A549 (cell line): ENCODE measurements at regions of chr13 and their contacts with region 1.

Region 1: GRCh38 chr13:51286135-51287002 is 53.1 kb upstream of the SERPINE3 start:
- DNase-seq: peak; percentile 31 to 63
- ATAC-seq: peak; percentile 90 to 97
- H3K4me3 ChIP-seq: no peak overlapping the region
- H3K27ac ChIP-seq: no peak overlapping the region
- H3K4me1 ChIP-seq: peaks cover 1% of the 10 kb centered on the region; the same call in 1 of the 3 replicates
- CTCF ChIP-seq: peak; percentile 82
- EP300 ChIP-seq: no peak
- POLR2A ChIP-seq: no peak
- RAD21 ChIP-seq: peak; percentile 73 to 78

Region 2: DNA sequence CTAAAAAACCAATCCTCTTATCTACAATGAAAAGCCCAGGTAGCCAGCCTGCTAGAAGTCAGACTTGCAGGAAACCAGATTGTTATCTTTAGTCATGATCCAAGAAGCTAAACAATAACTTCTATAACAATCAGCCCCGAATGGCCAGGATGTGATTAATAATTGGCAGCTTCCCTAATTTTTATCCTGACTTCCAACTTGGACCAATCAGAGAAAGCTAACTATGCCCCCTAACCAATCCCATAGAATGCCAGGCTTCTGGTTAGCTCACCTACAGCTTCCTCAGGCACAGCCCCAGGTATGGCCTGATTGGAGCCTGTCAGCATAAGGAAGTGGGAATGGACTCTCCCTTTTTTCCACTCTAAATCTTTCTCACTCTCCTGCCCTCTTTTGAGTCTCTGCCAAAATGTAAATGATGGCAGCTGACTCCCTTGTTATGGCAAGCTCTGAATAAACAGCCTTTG is 837.8 kb before region 1 on chr13:
- CTCF ChIA-PET with region 1: no interaction called
- POLR2A ChIA-PET with region 1: no interaction called
- DNase-seq: no peak
- ATAC-seq: no peak
- H3K4me3 ChIP-seq: no peak overlapping the region
- H3K27ac ChIP-seq: no peak overlapping the region
- H3K4me1 ChIP-seq: no peaks in the 10 kb centered on the region
- CTCF ChIP-seq: no peak
- EP300 ChIP-seq: no peak
- POLR2A ChIP-seq: no peak
- RAD21 ChIP-seq: no peak

Region 3: DNA sequence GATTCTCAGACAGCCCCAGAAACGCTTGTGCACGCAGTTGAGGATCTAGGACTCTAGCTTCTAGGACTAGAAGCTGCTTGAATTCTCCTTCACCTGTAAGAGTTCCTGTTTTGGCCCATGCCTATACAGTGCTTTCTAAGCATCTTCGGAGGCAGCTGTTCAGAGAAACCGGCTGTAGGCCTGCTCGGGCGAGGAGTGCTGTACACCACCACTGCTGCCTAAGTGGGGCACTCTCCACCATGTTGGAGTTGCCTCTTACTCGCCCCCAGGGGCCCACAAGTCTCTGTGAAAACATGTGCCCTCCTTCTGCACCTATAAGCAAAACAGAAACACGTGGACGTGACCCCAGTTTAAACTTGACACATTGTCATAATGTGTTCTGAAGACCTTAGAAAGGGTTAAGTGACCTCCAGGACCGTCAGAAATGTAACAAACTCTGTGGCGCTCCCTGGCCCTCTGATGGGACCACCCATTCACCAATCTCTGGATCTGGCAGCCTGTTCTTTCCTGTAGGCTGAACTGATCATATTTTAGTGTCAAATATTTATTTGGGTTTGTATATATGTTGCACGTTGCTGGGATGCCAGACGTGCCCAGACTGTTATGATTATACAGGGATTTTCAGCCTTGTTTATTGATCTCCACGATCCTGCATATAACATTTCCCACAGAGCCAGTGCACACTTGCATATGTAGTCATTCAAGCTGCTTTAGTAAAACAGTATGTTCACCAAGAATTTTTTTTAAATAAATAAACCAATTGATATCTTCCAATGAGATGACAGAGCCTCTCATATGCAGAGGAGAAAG is 236.1 kb before region 1 on chr13:
- CTCF ChIA-PET with region 1: no interaction called
- POLR2A ChIA-PET with region 1: no interaction called
- DNase-seq: no peak
- ATAC-seq: no peak
- H3K4me3 ChIP-seq: no peak overlapping the region
- H3K27ac ChIP-seq: no peak overlapping the region
- H3K4me1 ChIP-seq: no peaks in the 10 kb centered on the region
- CTCF ChIP-seq: no peak
- EP300 ChIP-seq: no peak
- POLR2A ChIP-seq: no peak
- RAD21 ChIP-seq: no peak

Region 4: GRCh38 chr13:51125498-51126226 is 160.7 kb before region 1 on chr13:
- CTCF ChIA-PET with region 1: interaction called, 44 read pairs
- POLR2A ChIA-PET with region 1: no interaction called
- DNase-seq: peak; percentile 19 to 69
- ATAC-seq: peak; percentile 89 to 93
- H3K4me3 ChIP-seq: no peak overlapping the region
- H3K27ac ChIP-seq: no peak overlapping the region
- H3K4me1 ChIP-seq: peaks cover 10% of the 10 kb centered on the region; the same call in 1 of the 3 replicates
- CTCF ChIP-seq: peak; percentile 59
- EP300 ChIP-seq: no peak
- POLR2A ChIP-seq: no peak
- RAD21 ChIP-seq: peak; percentile 65 to 75

Region 5: DNA sequence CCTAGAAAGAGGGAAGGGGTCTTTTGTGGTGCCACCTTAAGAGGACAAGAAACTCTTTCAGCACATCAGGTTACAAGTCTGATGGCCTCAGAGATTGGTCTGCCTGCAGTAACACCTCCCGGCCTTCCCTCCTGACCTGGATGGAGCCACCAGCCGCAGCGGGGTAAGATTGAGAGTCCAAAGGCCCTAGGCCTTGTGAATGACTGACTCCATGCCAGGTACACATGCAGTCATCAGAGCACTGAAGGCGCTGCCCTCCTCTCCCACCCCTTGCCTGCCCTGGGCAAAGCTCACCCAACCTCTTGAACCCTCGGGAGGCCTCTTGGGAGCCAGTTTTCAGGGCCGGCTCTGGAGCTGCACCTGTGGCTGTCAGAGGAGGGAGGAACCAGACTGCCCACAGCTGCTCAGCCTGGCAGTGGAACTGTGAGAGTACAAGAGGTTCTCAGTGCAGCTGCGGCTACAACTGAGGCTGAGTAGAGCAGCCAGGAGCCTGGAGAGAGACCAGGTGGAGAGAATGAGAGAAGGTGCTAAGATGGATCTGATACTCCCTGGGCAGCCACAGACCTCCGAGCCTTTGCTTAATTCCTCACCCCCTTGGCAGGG is 151.5 kb before region 1 on chr13:
- CTCF ChIA-PET with region 1: interaction called, 20 read pairs
- POLR2A ChIA-PET with region 1: no interaction called
- DNase-seq: no peak
- ATAC-seq: no peak
- H3K4me3 ChIP-seq: no peak overlapping the region
- H3K27ac ChIP-seq: no peak overlapping the region
- H3K4me1 ChIP-seq: no peaks in the 10 kb centered on the region
- CTCF ChIP-seq: no peak
- EP300 ChIP-seq: no peak
- POLR2A ChIP-seq: no peak
- RAD21 ChIP-seq: no peak

Region 6: GRCh38 chr13:51148952-51149573 is 137.3 kb before region 1 on chr13:
- CTCF ChIA-PET with region 1: interaction called, 76 read pairs
- POLR2A ChIA-PET with region 1: no interaction called
- DNase-seq: peak in 1 of 2 experiments; percentile 40
- ATAC-seq: peak; percentile 70 to 81
- H3K4me3 ChIP-seq: no peak overlapping the region
- H3K27ac ChIP-seq: no peak overlapping the region
- H3K4me1 ChIP-seq: no peaks in the 10 kb centered on the region
- CTCF ChIP-seq: peak; percentile 48
- EP300 ChIP-seq: no peak
- POLR2A ChIP-seq: no peak
- RAD21 ChIP-seq: peak; percentile 61 to 65

Region 7: DNA sequence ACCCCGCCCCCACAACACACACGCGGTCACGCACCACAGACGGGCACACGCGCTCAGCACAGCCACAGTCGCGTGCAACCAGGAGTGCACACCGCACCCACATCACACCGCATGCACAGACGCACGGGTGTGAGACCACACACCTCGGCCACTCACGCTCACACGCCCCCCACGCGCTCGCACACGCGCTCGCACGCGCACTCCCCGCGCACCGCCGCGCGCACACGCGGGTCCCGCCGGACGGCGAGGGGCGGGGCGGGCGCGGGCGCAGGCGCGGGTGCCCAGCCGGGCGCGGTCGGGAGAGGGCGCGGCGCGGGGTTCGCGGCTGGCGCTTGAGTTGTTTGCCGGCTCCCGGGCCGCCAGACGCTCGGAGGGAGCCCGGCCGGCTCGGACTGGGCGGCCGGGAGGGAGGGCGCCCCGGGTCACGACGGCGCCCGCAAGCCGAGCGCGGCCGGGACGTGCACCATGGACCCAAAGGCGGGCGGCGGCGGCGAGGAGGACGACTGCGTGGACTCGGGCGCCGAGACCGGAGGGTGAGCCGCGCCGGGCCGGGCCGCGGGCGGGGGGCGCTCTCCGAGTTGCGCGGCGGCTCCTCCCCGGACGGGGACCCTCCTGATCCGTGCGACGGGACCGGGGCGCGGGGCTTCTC is 64.2 kb before region 1 on chr13 and contains the start of gene FAM124A:
- CTCF ChIA-PET with region 1: interaction called, 20 read pairs
- POLR2A ChIA-PET with region 1: no interaction called
- DNase-seq: peak; percentile 11 to 23
- ATAC-seq: peak; percentile 91 to 92
- H3K4me3 ChIP-seq: peak within 1 kb of the TSS; percentile 78
- H3K27ac ChIP-seq: peak within 1 kb of the TSS; percentile 84 to 90
- H3K4me1 ChIP-seq: no peaks in the 10 kb centered on the region
- CTCF ChIP-seq: peak; percentile 54
- EP300 ChIP-seq: no peak
- POLR2A ChIP-seq: peak; percentile 15
- RAD21 ChIP-seq: no peak
- polyA plus RNA-seq, gene FAM124A: 1.5 and 1.6 TPM in 2 replicates

Region 8: DNA sequence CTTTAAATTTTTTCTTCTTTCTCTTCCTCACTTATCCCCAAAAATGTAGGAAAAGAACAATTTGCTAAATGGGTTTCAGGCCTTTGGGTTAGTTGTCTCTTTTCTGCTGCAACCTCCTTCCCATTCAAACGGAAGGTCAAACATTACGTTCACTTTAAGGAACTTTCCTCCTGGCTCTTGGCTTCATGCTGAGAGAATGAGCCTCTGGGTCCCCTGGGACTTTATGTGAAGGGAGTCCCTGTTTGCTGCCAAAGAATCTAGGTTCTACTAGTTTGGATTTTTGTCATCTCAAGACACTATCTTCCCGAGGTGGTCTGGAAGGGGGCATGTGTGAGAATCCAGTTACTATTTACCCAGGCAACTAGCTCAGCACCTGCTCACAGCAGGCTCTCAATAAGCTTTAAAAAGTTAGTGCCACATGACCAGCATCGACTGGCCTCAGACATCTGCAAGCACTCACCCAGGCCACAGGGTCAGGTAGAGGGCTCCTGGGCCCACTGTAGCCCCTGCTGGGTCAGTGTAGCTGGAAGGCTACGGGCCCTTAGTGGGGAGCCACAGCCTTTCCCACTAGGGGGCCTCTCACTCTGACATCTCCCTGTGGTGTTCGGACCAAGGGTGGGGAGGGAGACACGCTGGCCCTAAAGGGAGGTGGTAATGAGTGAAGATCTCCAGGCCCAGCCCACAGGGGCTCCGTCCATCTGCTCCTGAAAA is 23.7 kb before region 1 on chr13:
- CTCF ChIA-PET with region 1: interaction called, 30 read pairs
- POLR2A ChIA-PET with region 1: no interaction called
- DNase-seq: no peak
- ATAC-seq: peak; percentile 47 to 66; a peak in 4 of 6 replicates
- H3K4me3 ChIP-seq: no peak overlapping the region
- H3K27ac ChIP-seq: no peak overlapping the region
- H3K4me1 ChIP-seq: no peaks in the 10 kb centered on the region
- CTCF ChIP-seq: no peak
- EP300 ChIP-seq: no peak
- POLR2A ChIP-seq: no peak
- RAD21 ChIP-seq: no peak

Region 9: GRCh38 chr13:51297556-51297955 is 11.2 kb after region 1 on chr13:
- CTCF ChIA-PET with region 1: interaction called, 29 read pairs
- POLR2A ChIA-PET with region 1: no interaction called
- DNase-seq: no peak
- ATAC-seq: no peak
- H3K4me3 ChIP-seq: no peak overlapping the region
- H3K27ac ChIP-seq: no peak overlapping the region
- H3K4me1 ChIP-seq: no peaks in the 10 kb centered on the region
- CTCF ChIP-seq: no peak
- EP300 ChIP-seq: no peak
- POLR2A ChIP-seq: no peak
- RAD21 ChIP-seq: no peak

Region 10: DNA sequence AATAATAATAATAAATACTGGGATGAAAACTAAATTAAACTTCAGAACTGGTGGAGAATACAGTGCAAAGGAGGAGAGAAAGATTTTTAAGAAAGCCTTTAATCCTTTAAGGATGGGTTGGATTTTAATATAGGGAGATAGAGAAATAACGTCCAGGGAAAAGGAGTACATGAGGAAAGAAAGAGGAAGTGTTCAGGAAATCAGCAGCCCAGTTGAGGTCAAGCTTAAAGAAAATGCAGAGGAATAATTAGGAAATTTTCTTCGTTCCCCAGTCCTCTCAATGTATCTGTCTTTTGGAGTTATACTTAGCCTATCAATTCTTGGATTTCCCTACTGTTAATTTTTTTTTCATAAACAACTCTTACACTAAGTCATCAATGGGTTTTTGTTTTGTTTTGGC is 118.8 kb after region 1 on chr13:
- CTCF ChIA-PET with region 1: no interaction called
- POLR2A ChIA-PET with region 1: no interaction called
- DNase-seq: no peak
- ATAC-seq: no peak
- H3K4me3 ChIP-seq: no peak overlapping the region
- H3K27ac ChIP-seq: no peak overlapping the region
- H3K4me1 ChIP-seq: no peaks in the 10 kb centered on the region
- CTCF ChIP-seq: no peak
- EP300 ChIP-seq: no peak
- POLR2A ChIP-seq: no peak
- RAD21 ChIP-seq: no peak